PC-9 (cell line): ENCODE measurements at regions of chr15 and their contacts with region 1.

Region 1: DNA sequence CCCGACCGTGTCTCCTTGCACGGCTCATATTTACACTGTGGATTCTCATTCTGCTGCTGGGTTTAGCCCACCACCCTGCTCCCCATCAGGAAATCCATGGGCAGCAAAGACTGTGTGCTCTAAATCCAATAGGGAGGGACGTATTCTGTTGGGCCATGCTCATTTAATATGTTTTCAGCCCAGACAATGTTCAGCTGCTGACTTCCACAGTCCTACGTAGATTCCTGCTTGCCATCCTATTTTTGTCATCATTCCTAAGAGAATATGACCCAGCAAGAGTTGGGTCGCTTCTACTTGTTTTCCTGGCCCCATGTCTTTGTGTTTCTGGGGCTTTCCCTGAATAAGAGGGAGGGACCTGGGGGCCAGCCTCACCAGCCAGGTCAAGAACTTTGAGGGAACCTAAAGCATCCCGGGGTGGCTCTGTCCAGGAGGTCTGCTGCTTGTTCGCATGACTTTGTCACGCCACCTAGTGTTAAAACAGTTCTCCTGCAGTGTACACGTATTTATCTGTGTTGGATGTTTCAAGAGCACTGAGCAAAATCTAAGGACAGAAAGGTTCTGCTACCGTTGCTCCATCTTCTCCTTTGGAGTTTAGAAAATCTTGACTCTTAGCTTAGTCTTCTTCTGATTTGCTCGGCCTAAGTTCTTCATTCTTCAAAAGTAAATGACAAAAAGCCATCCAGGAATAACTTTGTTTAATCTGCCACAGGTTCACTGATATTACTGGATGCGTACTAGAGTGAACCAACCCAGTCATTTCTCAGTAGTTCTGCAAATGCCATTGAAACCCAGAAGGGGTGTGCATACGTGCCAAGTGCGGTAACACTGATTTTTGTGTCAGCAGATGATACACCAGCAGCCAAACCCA is 79.8 kb upstream of the NR2E3 start:
- DNase-seq: peak in 1 of 2 experiments; percentile 37
- H3K4me3 ChIP-seq: no peak overlapping the region
- H3K27ac ChIP-seq: no peak overlapping the region
- H3K4me1 ChIP-seq: no peaks in the 10 kb centered on the region
- H3K27me3 ChIP-seq: no peaks in the 10 kb centered on the region
- CTCF ChIP-seq: peak; percentile 77

Region 2: DNA sequence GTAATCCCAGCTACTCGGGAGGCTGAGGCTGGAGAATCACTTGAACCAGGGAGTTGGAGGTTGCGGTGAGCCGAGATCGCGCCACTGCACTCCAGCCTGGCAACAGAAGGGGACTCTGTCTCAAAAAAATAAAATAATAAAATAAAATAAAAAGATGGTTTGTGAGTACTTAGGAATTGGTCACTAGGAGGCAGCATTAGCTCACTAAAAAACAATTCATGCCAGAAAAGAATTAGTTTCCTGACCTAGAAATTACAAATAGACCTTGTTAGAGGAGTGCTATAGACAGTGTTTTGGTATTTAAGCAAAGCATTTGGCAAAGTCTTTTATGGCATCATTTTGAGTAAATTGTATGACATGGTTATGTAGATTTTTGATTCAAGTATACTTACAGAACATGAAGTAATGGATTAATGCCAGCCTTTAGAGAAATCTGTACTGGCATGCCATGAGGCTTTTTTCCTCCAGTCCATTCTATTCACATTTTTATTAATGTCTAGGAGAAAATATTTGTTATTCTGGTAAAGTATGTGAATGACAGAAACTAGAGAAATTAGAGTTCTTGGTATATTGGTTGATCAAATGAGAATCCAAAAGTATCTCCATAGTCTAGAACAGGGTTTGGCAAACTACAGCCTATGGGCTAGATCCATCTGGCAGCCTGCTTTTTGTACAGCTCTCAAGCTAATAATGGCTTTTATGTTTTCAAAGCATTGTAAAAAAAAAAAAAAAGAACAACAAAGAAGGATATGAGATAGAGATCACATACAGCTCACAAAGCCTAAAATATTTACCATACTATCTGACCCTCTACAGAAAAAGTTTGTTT is 756.3 kb before region 1 on chr15:
- CTCF ChIA-PET with region 1: no interaction called
- POLR2A ChIA-PET with region 1: no interaction called
- intact Hi-C with region 1: loop called (anchors 5 kb)
- DNase-seq: peak in 1 of 2 experiments; percentile 1
- H3K4me3 ChIP-seq: no peak overlapping the region
- H3K27ac ChIP-seq: no peak overlapping the region
- H3K4me1 ChIP-seq: no peaks in the 10 kb centered on the region
- H3K27me3 ChIP-seq: no peaks in the 10 kb centered on the region
- CTCF ChIP-seq: peak; percentile 67

Region 3: GRCh38 chr15:71448688-71449114 is 281.8 kb before region 1 on chr15:
- CTCF ChIA-PET with region 1: interaction called, 8 read pairs
- POLR2A ChIA-PET with region 1: no interaction called
- intact Hi-C with region 1: loop called (anchors 1 kb)
- DNase-seq: peak; percentile 47
- H3K4me3 ChIP-seq: no peak overlapping the region
- H3K27ac ChIP-seq: no peak overlapping the region
- H3K4me1 ChIP-seq: peaks cover 46% of the 10 kb centered on the region
- H3K27me3 ChIP-seq: no peaks in the 10 kb centered on the region
- CTCF ChIP-seq: peak; percentile 83

Region 4: GRCh38 chr15:71532994-71533393 is 197.5 kb before region 1 on chr15:
- CTCF ChIA-PET with region 1: no interaction called
- POLR2A ChIA-PET with region 1: no interaction called
- intact Hi-C with region 1: loop called (anchors 5 kb)
- DNase-seq: peak; percentile 35 to 37
- H3K4me3 ChIP-seq: no peak overlapping the region
- H3K27ac ChIP-seq: no peak overlapping the region
- H3K4me1 ChIP-seq: 0 out of 2 replicates have a peak, but pooled peaks cover under 1% of the 10 kb centered on the region
- H3K27me3 ChIP-seq: no peaks in the 10 kb centered on the region
- CTCF ChIP-seq: peak; percentile 68

Region 5: GRCh38 chr15:71575474-71576045 is 155.0 kb before region 1 on chr15:
- CTCF ChIA-PET with region 1: no interaction called
- POLR2A ChIA-PET with region 1: no interaction called
- intact Hi-C with region 1: loop called (anchors 2 kb)
- DNase-seq: no peak
- H3K4me3 ChIP-seq: no peak overlapping the region
- H3K27ac ChIP-seq: no peak overlapping the region
- H3K4me1 ChIP-seq: peaks cover 9% of the 10 kb centered on the region; the same call in 1 of the 2 replicates
- H3K27me3 ChIP-seq: no peaks in the 10 kb centered on the region
- CTCF ChIP-seq: peak; percentile 61

Region 6: GRCh38 chr15:71651750-71652186 is 78.7 kb before region 1 on chr15:
- CTCF ChIA-PET with region 1: no interaction called
- POLR2A ChIA-PET with region 1: no interaction called
- intact Hi-C with region 1: loop called (anchors 5 kb)
- DNase-seq: peak in 1 of 2 experiments; percentile 17
- H3K4me3 ChIP-seq: no peak overlapping the region
- H3K27ac ChIP-seq: no peak overlapping the region
- H3K4me1 ChIP-seq: peaks cover 14% of the 10 kb centered on the region
- H3K27me3 ChIP-seq: no peaks in the 10 kb centered on the region
- CTCF ChIP-seq: peak; percentile 41; the same call in 1 of the 2 replicates

Region 7: GRCh38 chr15:71749500-71749899 is 19.0 kb after region 1 on chr15:
- CTCF ChIA-PET with region 1: no interaction called
- POLR2A ChIA-PET with region 1: no interaction called
- intact Hi-C with region 1: no loop called
- DNase-seq: no peak
- H3K4me3 ChIP-seq: no peak overlapping the region
- H3K27ac ChIP-seq: no peak overlapping the region
- H3K4me1 ChIP-seq: peaks cover 39% of the 10 kb centered on the region
- H3K27me3 ChIP-seq: no peaks in the 10 kb centered on the region
- CTCF ChIP-seq: no peak